ENCODE measurements at regions of chr4 and their contacts with region 1.

Region 1: DNA sequence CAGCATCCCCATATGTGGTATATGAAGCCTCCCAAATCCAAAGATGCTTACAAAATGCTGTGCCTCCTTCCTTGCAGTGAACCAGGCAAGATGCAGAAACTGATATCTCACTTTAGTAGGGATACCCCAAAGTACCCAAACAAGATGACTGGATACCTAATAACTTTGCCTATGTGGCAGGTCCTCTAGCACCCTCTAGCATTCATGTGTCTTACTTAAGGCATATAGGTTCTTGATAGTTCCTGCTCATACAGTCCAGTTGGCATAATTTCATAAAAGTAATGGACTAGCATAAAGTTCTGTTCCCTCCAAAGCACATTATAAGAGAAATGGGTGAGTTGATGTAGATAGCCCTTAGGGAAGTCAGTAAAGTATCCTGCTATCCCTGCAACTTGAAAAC is 36.8 kb upstream of the SPP1 start:
- DNase-seq: no peak
- ATAC-seq: no peak
- H3K4me3 ChIP-seq: no peak overlapping the region
- H3K27ac ChIP-seq: no peak overlapping the region
- H3K4me1 ChIP-seq: no peaks in the 10 kb centered on the region
- H3K27me3 ChIP-seq: no peaks in the 10 kb centered on the region
- CTCF ChIP-seq: no peak
- POLR2A ChIP-seq: no peak

Region 2: DNA sequence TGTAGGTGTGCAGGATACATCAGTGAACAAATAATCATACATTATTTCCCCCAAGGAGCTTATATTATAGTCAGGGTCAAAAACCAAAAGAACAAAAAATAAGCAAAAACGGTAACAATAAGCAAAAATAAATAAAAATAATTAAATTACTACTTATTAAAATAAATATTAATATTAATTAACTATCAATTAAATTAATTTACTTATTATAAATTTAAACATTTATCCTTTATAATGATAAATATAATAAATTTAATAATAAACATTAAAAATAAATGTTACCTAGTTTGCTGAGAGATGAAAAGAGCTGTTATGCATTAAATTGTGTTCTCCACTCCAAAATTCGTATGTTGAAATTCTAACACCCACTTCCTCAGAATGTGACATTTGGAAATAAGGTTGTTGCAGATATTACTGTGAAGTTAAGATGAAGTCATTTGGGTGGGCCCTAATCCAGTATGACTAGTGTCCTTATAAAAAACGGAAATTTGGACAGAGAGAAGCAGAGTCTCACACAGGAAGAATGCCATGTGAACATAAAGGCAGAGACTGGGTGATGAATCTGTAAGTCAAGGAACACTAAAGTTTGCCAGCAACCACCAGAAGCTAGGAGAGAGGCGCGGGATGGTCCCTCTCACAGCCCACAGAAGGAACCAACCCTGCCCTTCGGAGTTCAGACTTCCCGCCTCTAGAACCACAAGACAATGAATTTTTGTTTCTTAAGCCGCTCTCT is 206.5 kb before region 1 on chr4:
- intact Hi-C with region 1: no loop called
- DNase-seq: no peak
- ATAC-seq: peak in 2 of 4 donors; percentile 74
- H3K4me3 ChIP-seq: no peak overlapping the region
- H3K27ac ChIP-seq: no peak overlapping the region
- H3K4me1 ChIP-seq: peaks cover 0 to 10% (median 0%) of the 10 kb centered on the region in 12 donors
- H3K27me3 ChIP-seq: peaks cover 0 to 3% (median 0%) of the 10 kb centered on the region in 9 donors
- CTCF ChIP-seq: no peak
- POLR2A ChIP-seq: no peak

Region 3: DNA sequence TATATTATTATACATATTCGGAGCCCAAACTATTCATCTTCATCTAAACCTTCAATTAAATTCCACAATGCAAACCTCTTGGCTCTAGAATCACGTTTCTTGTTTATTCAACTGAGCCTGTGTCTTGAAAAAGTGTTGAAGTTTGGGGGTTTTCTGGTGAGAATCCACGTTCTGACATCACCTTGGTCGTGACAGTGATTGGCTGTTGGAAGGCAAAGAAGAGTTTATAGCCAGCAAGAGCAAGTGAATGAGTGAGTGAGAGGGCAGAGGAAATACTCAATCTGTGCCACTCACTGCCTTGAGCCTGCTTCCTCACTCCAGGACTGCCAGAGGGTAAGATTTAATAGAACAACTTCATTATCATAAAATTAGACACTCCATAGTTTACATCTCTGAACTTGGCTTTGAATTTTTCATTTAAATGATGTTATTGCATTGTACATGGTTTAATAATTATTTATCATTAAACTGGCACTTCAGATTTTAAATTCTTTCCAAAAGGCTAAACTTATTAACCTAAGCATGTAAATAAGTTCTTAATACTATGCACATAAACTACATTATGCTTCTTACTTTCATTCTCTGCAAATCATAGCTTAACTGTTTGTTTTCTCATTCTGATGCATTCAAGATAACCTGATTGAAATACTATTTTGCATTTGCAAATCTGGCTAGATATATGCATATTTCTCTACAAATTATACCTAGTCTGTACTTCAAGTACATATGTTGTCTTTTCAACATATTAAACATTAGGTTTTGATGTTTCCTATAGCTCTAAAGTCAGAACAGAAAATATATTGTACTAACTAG is 139.2 kb before region 1 on chr4 and contains the start of gene IBSP:
- intact Hi-C with region 1: no loop called
- DNase-seq: no peak
- ATAC-seq: no peak
- H3K4me3 ChIP-seq: no peak within 1 kb of the TSS
- H3K27ac ChIP-seq: no peak within 1 kb of the TSS
- H3K4me1 ChIP-seq: no peaks in the 10 kb centered on the region
- H3K27me3 ChIP-seq: no peaks in the 10 kb centered on the region
- CTCF ChIP-seq: no peak
- POLR2A ChIP-seq: no peak
- total RNA-seq, gene IBSP: 0.19 to 0.50 TPM in 2 of 9 donors, not detected in the others

Region 4: GRCh38 chr4:87926554-87927098 is 12.1 kb before region 1 on chr4:
- intact Hi-C with region 1: loop called in 6 of 10 experiments (anchors 1 kb)
- DNase-seq: no peak
- ATAC-seq: no peak
- H3K4me3 ChIP-seq: no peak overlapping the region
- H3K27ac ChIP-seq: no peak overlapping the region
- H3K4me1 ChIP-seq: no peaks in the 10 kb centered on the region
- H3K27me3 ChIP-seq: no peaks in the 10 kb centered on the region
- CTCF ChIP-seq: no peak
- POLR2A ChIP-seq: no peak

Region 5: GRCh38 chr4:87995435-87995834 is 56.7 kb after region 1 on chr4:
- intact Hi-C with region 1: no loop called
- DNase-seq: no peak
- ATAC-seq: no peak
- H3K4me3 ChIP-seq: no peak overlapping the region
- H3K27ac ChIP-seq: no peak overlapping the region
- H3K4me1 ChIP-seq: no peaks in the 10 kb centered on the region
- H3K27me3 ChIP-seq: no peaks in the 10 kb centered on the region
- CTCF ChIP-seq: no peak
- POLR2A ChIP-seq: no peak

Measured in heart left ventricle (tissue), 16 donors.